Dorsolateral prefrontal cortex (tissue), 120 donors: ENCODE measurements at regions of chr1 and their contacts with region 1.

Region 1: DNA sequence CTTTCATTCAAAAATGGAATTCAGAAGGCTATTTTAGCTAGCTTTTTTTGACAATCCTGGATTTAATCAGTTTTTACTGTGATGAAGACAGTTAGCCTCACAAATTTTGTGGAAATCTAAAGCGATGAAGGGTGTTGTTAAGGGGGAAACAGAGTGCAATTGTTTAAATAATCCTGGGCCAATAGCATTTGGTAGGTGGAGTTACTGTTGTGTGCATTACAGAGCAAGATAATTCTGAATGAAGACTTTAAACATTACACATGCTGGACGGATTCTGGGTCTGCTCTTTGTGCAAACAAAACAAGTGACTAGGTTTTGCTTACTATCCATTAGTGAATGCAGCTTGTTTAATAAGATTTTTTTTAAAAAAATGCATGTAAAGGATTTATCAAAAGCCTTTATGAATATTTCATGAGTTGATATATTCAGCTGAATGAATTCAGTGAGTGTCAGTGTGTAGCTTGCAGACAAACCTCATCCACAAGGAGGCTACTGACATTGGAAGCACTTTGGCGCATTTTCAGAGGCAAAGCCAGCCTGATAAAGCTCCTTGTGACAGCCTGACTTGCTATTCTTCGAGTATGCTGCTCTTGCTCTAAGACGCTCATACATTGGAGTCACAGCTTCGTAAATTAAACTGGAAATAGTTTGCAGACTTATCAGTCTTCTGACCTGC is 199.6 kb downstream of the PDE4B start:
- DNase-seq: peak in 9 of 10 donors; percentile 12 to 82 (median 60)
- H3K4me3 ChIP-seq: peak overlapping the region; percentile 38 to 85 (median 66)
- H3K27ac ChIP-seq: peak overlapping the region; percentile 50 to 95 (median 89)
- H3K27me3 ChIP-seq: no peaks in the 10 kb centered on the region
- CTCF ChIP-seq: peak in 47 of 56 donors; percentile 4 to 63 (median 36)

Region 2: DNA sequence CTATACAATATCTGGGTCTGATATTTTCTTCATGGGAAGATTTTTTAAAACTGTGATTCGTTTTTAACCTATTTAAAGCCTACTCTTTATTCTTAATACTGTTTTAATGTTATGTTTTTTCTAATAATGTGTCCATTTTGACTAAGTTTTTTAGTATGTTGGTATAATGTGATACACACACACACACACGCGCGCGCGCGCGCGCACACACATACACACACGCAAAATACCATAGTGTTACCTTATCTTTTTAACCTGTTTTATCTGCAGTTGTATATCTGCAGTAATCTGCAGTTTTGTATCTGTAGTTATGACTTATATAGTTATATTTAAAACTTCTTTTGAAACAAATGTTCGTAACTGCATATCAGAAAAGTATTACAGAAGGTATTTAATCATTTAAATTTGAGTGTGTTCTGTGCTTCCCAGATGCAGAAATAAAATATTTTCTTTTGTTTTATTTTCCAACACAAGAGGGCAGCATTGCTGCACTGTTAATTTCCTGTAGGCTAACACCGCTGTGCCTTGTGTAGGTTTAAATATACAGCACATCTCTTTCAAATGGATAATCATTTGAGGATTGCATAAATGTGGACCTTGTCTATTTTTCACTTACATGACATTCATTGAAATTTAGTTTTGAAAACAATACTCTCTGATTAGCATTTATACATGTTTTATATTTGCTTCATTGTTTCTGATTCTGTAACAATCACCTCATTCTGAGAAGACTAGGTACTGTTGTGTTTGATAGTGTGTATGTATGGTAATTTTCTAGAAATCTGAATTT is 33.5 kb before region 1 on chr1:
- intact Hi-C with region 1: loop called (anchors 5 kb)
- DNase-seq: peak in 1 of 10 donors; percentile 8
- H3K4me3 ChIP-seq: peak overlapping the region in 29 of 59 donors; percentile 1 to 56 (median 25)
- H3K27ac ChIP-seq: peak overlapping the region in 55 of 59 donors; percentile 1 to 99 (median 71)
- H3K27me3 ChIP-seq: no peaks in the 10 kb centered on the region
- CTCF ChIP-seq: peak; percentile 74 to 100 (median 88)

Region 3: GRCh38 chr1:66022904-66023620 is 30.8 kb after region 1 on chr1:
- intact Hi-C with region 1: no loop called
- DNase-seq: no peak
- H3K4me3 ChIP-seq: no peak overlapping the region
- H3K27ac ChIP-seq: peak overlapping the region in 7 of 59 donors; percentile 5 to 34 (median 11)
- H3K27me3 ChIP-seq: no peaks in the 10 kb centered on the region
- CTCF ChIP-seq: no peak

Region 4: GRCh38 chr1:66156144-66156543 is 163.8 kb after region 1 on chr1:
- intact Hi-C with region 1: loop called (anchors 5 kb)
- DNase-seq: no peak
- H3K4me3 ChIP-seq: peak overlapping the region in 1 of 59 donors; percentile 18
- H3K27ac ChIP-seq: peak overlapping the region; percentile 19 to 97 (median 89)
- H3K27me3 ChIP-seq: no peaks in the 10 kb centered on the region
- CTCF ChIP-seq: peak in 1 of 56 donors; percentile 9